Heart left ventricle (tissue), 16 donors: ENCODE measurements at regions of chr22 and their contacts with region 1.

Region 1: DNA sequence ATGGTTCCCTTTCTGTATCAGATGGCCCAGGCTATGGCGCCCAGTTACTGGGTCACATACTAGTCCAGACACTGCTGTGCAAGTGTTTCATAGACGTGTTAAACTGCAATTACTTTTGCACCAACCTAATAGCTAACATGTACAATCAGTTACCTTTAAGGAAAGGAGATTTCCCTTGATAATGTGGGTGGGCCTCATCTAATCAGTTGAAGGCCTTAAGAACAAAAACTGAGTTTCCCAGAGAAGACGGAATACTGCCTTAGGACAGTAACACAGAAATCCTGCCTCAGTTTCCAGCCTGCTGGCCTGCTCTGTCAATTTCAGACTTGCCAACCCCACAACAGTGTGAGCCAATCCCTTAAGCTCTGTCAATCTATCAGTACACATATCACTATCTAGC is 229.9 kb upstream of the SYN3 start:
- DNase-seq: no peak
- ATAC-seq: no peak
- H3K4me3 ChIP-seq: no peak overlapping the region
- H3K27ac ChIP-seq: no peak overlapping the region
- H3K4me1 ChIP-seq: no peaks in the 10 kb centered on the region
- H3K27me3 ChIP-seq: no peaks in the 10 kb centered on the region
- CTCF ChIP-seq: no peak
- POLR2A ChIP-seq: no peak

Region 2: GRCh38 chr22:33232071-33232470 is 56.0 kb before region 1 on chr22:
- intact Hi-C with region 1: no loop called
- DNase-seq: no peak
- ATAC-seq: no peak
- H3K4me3 ChIP-seq: no peak overlapping the region
- H3K27ac ChIP-seq: no peak overlapping the region
- H3K4me1 ChIP-seq: no peaks in the 10 kb centered on the region
- H3K27me3 ChIP-seq: no peaks in the 10 kb centered on the region
- CTCF ChIP-seq: no peak
- POLR2A ChIP-seq: no peak

Region 3: DNA sequence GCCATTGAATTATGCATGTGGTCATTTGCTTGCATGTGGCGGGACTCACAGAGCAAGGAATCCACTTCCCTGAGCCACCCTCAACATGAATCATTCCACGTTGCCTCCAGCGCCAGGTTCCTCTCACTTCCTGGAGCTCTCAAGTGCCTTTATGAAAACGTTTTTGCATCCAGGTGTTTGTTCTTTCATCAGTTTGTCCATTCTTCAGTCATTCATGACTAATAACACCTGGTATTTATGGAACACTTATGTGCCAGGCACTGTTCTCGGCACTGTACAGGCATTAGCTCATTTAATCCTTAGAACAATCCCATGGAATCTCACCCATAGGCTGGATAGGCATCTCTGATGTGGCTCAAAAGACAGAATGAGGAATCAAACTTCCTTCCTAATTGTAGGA is 26.2 kb after region 1 on chr22:
- intact Hi-C with region 1: no loop called
- DNase-seq: no peak
- ATAC-seq: no peak
- H3K4me3 ChIP-seq: no peak overlapping the region
- H3K27ac ChIP-seq: no peak overlapping the region
- H3K4me1 ChIP-seq: no peaks in the 10 kb centered on the region
- H3K27me3 ChIP-seq: no peaks in the 10 kb centered on the region
- CTCF ChIP-seq: no peak
- POLR2A ChIP-seq: no peak

Region 4: DNA sequence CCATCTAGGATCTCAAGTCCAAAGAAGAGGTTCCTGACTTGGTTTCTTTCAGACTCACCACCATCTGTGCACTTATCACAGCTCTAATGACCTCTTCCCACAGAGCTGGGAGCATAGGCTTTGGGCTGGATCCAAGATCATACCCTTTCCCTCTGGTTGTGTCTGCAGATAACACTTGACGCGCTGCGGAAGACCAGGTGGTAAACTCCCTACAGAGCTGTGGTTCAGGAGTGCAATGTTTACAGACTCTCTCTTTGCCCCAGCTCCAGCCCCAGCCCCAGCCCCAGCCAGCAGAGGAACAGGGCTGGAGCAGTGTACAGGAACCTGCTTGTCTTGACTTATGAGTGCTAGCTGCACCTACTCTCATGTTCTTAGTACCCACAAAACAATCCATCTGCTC is 44.5 kb after region 1 on chr22:
- intact Hi-C with region 1: loop called in 1 of 10 experiments (anchors 10 kb)
- DNase-seq: peak in 2 of 5 donors; percentile 16 to 43
- ATAC-seq: peak; percentile 47 to 90 (median 78)
- H3K4me3 ChIP-seq: no peak overlapping the region
- H3K27ac ChIP-seq: no peak overlapping the region
- H3K4me1 ChIP-seq: peaks cover 0 to 10% (median 2%) of the 10 kb centered on the region in 12 donors
- H3K27me3 ChIP-seq: no peaks in the 10 kb centered on the region
- CTCF ChIP-seq: no peak
- POLR2A ChIP-seq: no peak